ENCODE measurements at regions of chr3 and their contacts with region 1.

Region 1: DNA sequence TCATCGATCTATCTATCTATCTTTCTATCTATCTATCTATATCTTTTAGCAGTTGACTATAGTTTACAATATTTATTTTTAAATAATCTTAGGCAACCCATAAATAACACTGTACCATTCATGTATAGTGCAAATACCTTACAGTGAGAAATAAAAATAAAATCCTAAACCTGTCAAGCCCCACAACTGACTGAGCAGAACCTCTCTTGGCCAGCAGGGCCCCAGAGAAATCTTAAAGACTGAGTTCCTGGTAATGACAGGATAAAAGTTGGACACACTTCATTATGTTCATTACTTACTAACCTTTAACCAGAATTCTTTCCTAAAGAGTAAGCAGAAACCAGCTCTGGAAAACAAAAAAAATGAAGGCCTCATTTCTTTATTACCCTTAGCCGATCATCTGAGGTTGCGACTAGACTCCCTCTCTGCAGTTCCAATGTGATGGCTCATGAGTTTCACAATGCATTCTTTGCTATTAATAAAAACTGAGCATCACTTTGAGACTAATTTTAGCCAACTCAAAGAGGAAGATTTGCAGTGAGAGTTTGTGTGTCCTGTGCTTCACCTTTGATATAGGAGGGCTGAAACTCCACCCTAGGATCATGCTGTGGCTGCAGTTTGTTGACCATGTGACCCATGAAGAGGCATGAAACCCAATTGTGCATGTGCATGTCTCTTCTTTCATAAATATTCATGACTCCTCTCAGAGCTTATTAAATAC is 1072.0 kb downstream of the NSUN3 start:
- DNase-seq: no peak
- ATAC-seq: no peak
- H3K4me3 ChIP-seq: no peak overlapping the region
- H3K27ac ChIP-seq: no peak overlapping the region
- H3K4me1 ChIP-seq: no peaks in the 10 kb centered on the region
- H3K27me3 ChIP-seq: no peaks in the 10 kb centered on the region
- CTCF ChIP-seq: no peak
- POLR2A ChIP-seq: no peak
- RAD21 ChIP-seq: no peak

Region 2: GRCh38 chr3:95088464-95088863 is 46.4 kb before region 1 on chr3:
- CTCF ChIA-PET with region 1: no interaction called
- POLR2A ChIA-PET with region 1: no interaction called
- dilution Hi-C with region 1: no loop called
- in situ Hi-C with region 1: no loop called
- intact Hi-C with region 1: loop called (anchors 1 kb)
- DNase-seq: no peak
- ATAC-seq: no peak
- H3K4me3 ChIP-seq: no peak overlapping the region
- H3K27ac ChIP-seq: no peak overlapping the region
- H3K4me1 ChIP-seq: no peaks in the 10 kb centered on the region
- H3K27me3 ChIP-seq: no peaks in the 10 kb centered on the region
- CTCF ChIP-seq: no peak
- POLR2A ChIP-seq: no peak
- RAD21 ChIP-seq: no peak

Measured in IMR-90 (cell line).